ENCODE measurements at regions of chr1 and their contacts with region 1.

Region 1: DNA sequence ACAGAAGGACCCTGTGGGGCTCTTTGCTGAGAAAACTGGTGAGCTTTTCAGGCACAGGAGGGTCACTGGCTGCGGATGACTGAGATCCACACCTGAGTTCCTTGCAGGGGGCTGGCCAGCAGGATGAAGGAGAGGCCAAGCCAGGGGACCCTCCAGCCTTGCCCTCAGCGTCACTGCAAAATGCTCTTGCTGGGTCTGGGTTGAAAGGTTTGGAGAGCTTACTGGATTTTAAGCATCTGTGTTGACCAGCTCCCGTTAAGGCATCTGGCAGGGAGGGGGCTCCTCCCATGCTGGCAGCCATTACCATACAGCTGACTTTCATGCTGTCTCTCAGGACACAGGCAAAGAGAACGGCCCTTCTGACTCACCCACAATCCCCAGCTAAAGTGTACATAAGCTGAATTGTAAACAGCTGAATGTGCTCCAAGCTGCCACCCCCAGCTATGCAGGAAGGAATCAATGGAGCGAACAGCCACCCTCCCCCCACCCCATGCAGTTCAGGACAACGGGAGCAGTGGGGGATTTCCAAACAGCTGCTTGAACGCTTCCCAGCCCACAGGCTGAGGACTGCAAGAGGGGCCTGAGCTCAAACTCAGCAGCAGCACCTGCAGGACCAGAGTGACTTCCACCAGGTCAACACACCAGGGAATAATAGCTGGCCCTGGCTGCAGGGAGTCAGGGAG is 21.3 kb upstream of the A3GALT2 start:
- DNase-seq: no peak
- ATAC-seq: no peak
- H3K4me3 ChIP-seq: no peak overlapping the region
- H3K27ac ChIP-seq: no peak overlapping the region
- H3K4me1 ChIP-seq: peaks cover 11 to 26% of the 10 kb centered on the region in 2 experiments; a peak in 4 of 5 replicates
- H3K27me3 ChIP-seq: no peaks in the 10 kb centered on the region
- CTCF ChIP-seq: no peak
- EP300 ChIP-seq: no peak
- POLR2A ChIP-seq: no peak
- RAD21 ChIP-seq: no peak

Region 2: GRCh38 chr1:33327587-33328315 is 14.4 kb before region 1 on chr1:
- CTCF ChIA-PET with region 1: no interaction called
- POLR2A ChIA-PET with region 1: interaction called, 12 read pairs
- in situ Hi-C with region 1: no loop called
- intact Hi-C with region 1: no loop called
- DNase-seq: no peak
- ATAC-seq: no peak
- H3K4me3 ChIP-seq: no peak overlapping the region
- H3K27ac ChIP-seq: no peak overlapping the region
- H3K4me1 ChIP-seq: no peaks in the 10 kb centered on the region
- H3K27me3 ChIP-seq: no peaks in the 10 kb centered on the region
- CTCF ChIP-seq: no peak
- EP300 ChIP-seq: no peak
- POLR2A ChIP-seq: no peak
- RAD21 ChIP-seq: no peak

Measured in K562 (cell line).